ENCODE measurements at regions of chr16 and their contacts with region 1.

Region 1: GRCh38 chr16:85984947-85985451 is 86.0 kb downstream of the IRF8 start:
- DNase-seq: peak in 1 of 2 donors; percentile 5
- H3K4me3 ChIP-seq: no peak overlapping the region
- H3K27ac ChIP-seq: no peak overlapping the region
- H3K4me1 ChIP-seq: no peaks in the 10 kb centered on the region
- H3K27me3 ChIP-seq: peaks cover 0 to 43% of the 10 kb centered on the region in 2 donors
- CTCF ChIP-seq: no peak
- POLR2A ChIP-seq: no peak

Region 2: GRCh38 chr16:84985079-84986065 is 999.6 kb before region 1 on chr16:
- intact Hi-C with region 1: loop called (anchors 5 kb)
- DNase-seq: no peak
- H3K4me3 ChIP-seq: no peak overlapping the region
- H3K27ac ChIP-seq: no peak overlapping the region
- H3K4me1 ChIP-seq: no peaks in the 10 kb centered on the region
- H3K27me3 ChIP-seq: no peaks in the 10 kb centered on the region
- CTCF ChIP-seq: no peak
- POLR2A ChIP-seq: no peak

Region 3: DNA sequence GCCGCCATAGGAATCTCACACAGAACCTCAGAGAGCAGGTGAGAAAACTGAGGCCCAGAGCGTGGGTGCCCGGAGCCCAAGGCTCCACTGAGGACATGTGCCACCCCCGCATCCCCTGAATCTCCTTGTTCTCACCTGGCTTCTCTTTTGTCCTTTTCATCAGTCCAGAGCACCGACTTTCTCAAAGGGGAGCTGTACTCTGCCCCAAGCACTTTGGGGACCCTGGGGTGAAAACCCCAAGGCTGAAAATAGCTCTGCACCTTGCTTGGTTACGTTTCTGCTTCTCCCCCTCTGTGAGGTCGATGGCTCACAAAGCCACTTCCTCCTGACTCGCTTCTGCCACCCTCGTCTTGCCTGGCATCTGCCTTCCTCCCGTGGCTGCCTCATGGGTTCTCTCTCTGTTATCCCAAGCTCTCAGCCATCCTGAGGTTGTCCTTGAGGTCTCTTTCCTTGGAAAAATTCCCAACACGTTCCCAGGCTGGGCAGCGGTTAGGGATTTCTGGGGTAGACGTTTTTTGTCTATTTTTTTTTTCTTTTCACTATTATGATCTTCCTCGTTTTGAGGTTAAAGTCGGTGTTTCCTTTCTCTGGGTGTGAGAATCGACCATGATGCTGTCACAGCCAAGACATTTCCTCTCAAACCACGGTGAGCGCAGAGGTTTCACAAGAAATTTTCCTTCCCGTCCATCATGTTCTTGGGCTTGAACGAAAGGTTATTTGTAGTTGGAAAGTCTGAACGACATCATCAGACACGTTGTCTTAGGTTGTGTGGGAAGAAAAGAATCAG is 48.8 kb before region 1 on chr16:
- intact Hi-C with region 1: no loop called
- DNase-seq: no peak
- H3K4me3 ChIP-seq: no peak overlapping the region
- H3K27ac ChIP-seq: no peak overlapping the region
- H3K4me1 ChIP-seq: no peaks in the 10 kb centered on the region
- H3K27me3 ChIP-seq: peaks cover 0 to 28% of the 10 kb centered on the region in 2 donors
- CTCF ChIP-seq: no peak
- POLR2A ChIP-seq: no peak